Activated T-helper 1 cell treated with anti-CD3 and anti-CD28 coated beads, Interleukin-12 subunit alpha, Interleukin-12 subunit beta, Interleukin-2, Interleukin-4 antibody, amounts not matched to agents 30 ng/mL and 10 ng/mL and 1 ng/mL, durations not matched to agents 14 hours and 24 hours and 36 hours (primary cell): ENCODE measurements at regions of chrX and their contacts with region 1.

Region 1: DNA sequence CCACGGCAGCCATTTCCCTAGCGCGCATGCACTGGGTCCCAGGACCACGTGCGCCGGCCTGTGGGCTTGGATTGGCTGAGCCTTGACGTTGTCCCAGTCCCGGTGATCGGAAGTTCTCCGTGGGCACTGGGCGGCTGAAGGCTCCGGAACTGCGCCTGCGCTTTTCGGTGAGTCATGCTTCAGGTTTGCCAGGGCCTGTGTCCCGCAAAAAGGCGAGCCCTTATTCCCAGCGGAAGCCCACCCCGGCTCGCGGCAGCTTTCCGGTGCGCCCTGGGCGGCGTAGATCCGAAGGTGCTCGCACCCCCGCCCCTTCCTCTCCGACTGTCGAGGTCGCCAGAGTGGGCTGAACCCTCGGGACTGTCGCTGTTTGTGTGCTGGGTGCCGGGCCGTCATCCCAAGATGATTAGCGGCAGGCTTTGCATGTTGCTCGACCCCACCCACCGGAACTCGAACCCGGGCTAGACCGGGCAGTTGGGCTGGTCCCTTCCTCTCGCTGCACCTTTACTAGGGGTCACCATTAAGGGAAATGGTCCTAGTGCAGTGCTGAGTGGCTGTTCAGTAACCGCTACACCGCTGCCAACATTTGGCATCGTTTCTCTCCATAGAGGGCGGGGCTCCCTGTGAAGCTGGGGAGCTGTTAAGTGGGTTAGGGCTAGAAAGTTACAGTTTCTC is at the start of gene TCEANC:
- DNase-seq: peak; percentile 91
- H3K4me3 Mint-ChIP-seq: peak within 1 kb of the TSS; percentile 88
- H3K27ac Mint-ChIP-seq: peak within 1 kb of the TSS; percentile 92
- H3K4me1 Mint-ChIP-seq: peaks cover 20% of the 10 kb centered on the region
- H3K27me3 Mint-ChIP-seq: no peaks in the 10 kb centered on the region
- total RNA-seq, gene TCEANC: 3.9 and 5.0 TPM in 2 replicates

Region 2: GRCh38 chrX:12791257-12792228 is 861.6 kb before region 1 on chrX and contains the start of gene PRPS2:
- intact Hi-C with region 1: loop called (anchors 5 kb)
- DNase-seq: peak; percentile 62
- H3K4me3 Mint-ChIP-seq: peak within 1 kb of the TSS; percentile 88
- H3K27ac Mint-ChIP-seq: peak within 1 kb of the TSS; percentile 76
- H3K4me1 Mint-ChIP-seq: peaks cover 41% of the 10 kb centered on the region
- H3K27me3 Mint-ChIP-seq: peaks cover 8% of the 10 kb centered on the region
- total RNA-seq, gene PRPS2: 115 and 116 TPM in 2 replicates

Region 3: DNA sequence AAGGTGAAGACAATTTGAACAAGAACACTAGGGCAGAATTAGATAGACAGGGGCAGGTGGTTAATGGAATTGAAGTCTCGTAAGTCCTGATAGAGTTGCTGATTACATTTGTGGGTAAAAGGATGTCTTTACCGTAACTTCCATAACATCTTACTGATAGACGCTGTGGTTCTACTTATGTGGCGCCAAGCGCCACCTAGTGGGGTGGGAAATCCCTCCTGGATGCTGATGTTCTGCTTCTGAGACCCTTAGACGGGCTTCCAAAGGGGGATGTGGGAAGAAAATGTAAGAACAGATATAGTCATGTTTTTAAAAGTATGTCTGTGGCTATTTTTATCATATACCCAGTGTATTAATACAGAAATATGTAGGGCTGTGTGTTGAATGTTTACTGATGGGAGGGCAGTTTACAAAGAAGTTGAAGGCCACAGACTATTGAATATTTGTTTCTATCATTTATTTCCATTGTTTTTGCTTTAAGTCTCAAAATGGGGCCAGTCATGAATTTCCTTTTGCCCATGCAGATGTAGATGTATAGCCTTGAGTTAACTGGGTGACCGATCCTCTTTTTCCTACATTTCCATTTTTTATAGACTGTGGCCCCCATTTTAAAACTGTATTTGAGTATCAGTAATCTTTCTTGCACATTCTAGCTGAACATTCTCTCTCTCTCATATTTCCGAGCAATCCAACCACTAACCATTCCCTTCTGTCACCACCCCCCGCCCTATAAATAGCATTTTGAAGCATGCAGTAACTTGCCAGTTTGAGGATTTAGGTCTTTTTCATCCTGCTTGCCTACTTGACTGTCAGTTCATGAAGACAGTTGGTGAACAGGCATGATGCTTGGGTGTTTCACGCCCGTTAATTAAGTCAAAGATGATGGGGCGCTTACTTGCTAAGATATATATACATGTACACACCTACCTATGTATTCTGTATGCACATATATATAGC is 758.8 kb before region 1 on chrX:
- intact Hi-C with region 1: loop called (anchors 5 kb)
- DNase-seq: peak; percentile 31
- H3K4me3 Mint-ChIP-seq: no peak overlapping the region
- H3K27ac Mint-ChIP-seq: no peak overlapping the region
- H3K4me1 Mint-ChIP-seq: peaks cover 53% of the 10 kb centered on the region
- H3K27me3 Mint-ChIP-seq: peaks cover 4% of the 10 kb centered on the region

Region 4: GRCh38 chrX:13614154-13614553 is 39.0 kb before region 1 on chrX:
- intact Hi-C with region 1: loop called (anchors 2 kb)
- DNase-seq: no peak
- H3K4me3 Mint-ChIP-seq: no peak overlapping the region
- H3K27ac Mint-ChIP-seq: no peak overlapping the region
- H3K4me1 Mint-ChIP-seq: peaks cover 4% of the 10 kb centered on the region
- H3K27me3 Mint-ChIP-seq: no peaks in the 10 kb centered on the region

Region 5: GRCh38 chrX:13669246-13669737 is 16.1 kb after region 1 on chrX:
- intact Hi-C with region 1: loop called (anchors 1 kb)
- DNase-seq: peak; percentile 29
- H3K4me3 Mint-ChIP-seq: peak overlapping the region; percentile 47
- H3K27ac Mint-ChIP-seq: peak overlapping the region; percentile 90
- H3K4me1 Mint-ChIP-seq: peaks cover 13% of the 10 kb centered on the region
- H3K27me3 Mint-ChIP-seq: no peaks in the 10 kb centered on the region

Region 6: GRCh38 chrX:13688958-13689740 is 36.0 kb after region 1 on chrX and contains the start of gene RAB9A:
- intact Hi-C with region 1: loop called (anchors 1 kb)
- DNase-seq: peak; percentile 76
- H3K4me3 Mint-ChIP-seq: peak within 1 kb of the TSS; percentile 89
- H3K27ac Mint-ChIP-seq: peak within 1 kb of the TSS; percentile 95
- H3K4me1 Mint-ChIP-seq: peaks cover 51% of the 10 kb centered on the region
- H3K27me3 Mint-ChIP-seq: no peaks in the 10 kb centered on the region
- total RNA-seq, gene RAB9A: 9.4 and 11.8 TPM in 2 replicates

Region 7: GRCh38 chrX:15335135-15336022 is 1682.2 kb after region 1 on chrX and contains the start of gene PIGA:
- intact Hi-C with region 1: loop called (anchors 10 kb)
- DNase-seq: peak; percentile 89
- H3K4me3 Mint-ChIP-seq: peak within 1 kb of the TSS; percentile 91
- H3K27ac Mint-ChIP-seq: peak within 1 kb of the TSS; percentile 88
- H3K4me1 Mint-ChIP-seq: peaks cover 14% of the 10 kb centered on the region
- H3K27me3 Mint-ChIP-seq: no peaks in the 10 kb centered on the region
- total RNA-seq, gene PIGA: 23.9 and 25.4 TPM in 2 replicates